AG04449 (cell line): ENCODE measurements at regions of chr3 and their contacts with region 1.

Region 1: DNA sequence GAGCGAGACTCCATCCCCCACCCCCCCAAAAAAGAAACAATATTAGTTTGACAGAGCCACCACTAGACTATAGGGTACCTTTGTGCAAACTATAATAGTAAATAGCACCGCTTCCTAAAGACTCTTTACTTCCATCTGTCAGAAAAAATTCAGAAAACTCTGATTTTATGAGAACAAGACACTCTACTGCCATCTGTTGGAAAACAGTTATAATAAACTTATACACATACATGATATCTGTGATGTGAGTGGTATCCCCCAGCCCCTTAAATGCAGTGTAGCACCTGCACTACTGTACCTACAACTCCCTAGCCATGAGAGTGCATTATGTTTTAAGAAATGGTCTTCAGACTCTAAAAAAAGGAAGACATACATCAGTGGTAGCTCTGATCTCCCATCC is 47.1 kb upstream of the CTDSPL start:
- DNase-seq: no peak
- H3K4me3 ChIP-seq: no peak overlapping the region
- CTCF ChIP-seq: no peak

Region 2: DNA sequence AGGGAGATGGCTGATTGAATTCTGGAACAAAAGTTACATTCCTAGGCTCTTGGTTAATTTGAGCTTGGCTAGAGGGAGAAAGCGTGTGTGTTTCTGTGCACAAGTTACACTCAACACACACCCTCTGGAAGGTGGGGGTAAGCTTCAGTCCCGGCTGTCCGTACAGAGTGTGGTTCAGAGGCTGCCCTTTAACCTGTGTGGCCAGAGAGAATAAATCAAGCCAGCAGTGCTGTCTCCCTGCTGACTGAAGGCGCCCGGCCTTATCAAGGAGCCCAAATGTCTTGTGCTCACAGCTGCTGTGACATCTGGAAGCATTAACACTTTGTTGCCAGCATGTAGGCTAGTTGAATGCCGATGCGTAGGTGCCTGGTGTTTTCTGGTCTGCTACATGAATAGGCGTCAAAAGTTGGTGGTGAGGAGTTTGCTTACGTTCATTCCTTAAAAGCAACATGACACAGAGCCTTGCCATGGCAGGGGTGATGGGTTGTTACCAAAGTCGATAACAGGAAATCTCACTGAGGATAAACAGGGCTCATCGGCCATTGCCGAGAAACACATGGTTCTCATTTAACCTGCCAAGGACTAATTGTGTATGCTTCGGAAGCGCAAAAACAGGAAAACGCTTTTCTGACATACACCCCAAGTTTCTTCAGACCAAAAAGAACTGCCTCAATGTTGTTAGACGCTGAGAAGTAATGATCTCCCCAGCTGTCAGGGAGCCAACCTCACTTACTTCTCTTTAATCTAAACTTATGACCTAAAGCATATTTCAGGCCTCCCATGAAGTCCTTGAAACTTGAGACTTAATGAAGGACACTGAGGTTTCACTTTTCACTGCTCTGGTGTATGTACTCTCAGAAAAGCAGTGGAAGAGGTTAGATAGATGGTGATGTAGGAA is 48.7 kb before region 1 on chr3:
- CTCF ChIA-PET with region 1: no interaction called
- POLR2A ChIA-PET with region 1: no interaction called
- DNase-seq: no peak
- H3K4me3 ChIP-seq: no peak overlapping the region
- CTCF ChIP-seq: no peak

Region 3: DNA sequence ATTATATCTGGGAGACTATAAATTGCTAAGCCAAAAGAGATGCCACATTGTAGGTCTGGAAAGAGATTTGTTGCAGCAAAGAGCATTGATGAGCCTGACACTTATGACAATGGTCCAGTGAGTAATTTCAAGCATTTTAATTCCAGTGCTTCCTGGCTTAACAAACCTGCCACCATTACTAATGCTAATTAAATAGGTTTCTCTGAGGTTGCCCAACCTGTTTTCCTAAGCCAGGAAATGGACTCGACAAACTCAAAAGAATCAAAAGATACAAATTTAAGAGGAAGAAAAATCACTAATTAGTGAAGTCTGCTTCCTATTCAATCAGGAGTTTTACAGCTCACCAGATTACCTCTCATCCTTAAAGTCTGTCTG is 10.4 kb after region 1 on chr3:
- CTCF ChIA-PET with region 1: interaction called, 15 read pairs
- POLR2A ChIA-PET with region 1: no interaction called
- DNase-seq: no peak
- H3K4me3 ChIP-seq: no peak overlapping the region
- CTCF ChIP-seq: no peak

Region 4: DNA sequence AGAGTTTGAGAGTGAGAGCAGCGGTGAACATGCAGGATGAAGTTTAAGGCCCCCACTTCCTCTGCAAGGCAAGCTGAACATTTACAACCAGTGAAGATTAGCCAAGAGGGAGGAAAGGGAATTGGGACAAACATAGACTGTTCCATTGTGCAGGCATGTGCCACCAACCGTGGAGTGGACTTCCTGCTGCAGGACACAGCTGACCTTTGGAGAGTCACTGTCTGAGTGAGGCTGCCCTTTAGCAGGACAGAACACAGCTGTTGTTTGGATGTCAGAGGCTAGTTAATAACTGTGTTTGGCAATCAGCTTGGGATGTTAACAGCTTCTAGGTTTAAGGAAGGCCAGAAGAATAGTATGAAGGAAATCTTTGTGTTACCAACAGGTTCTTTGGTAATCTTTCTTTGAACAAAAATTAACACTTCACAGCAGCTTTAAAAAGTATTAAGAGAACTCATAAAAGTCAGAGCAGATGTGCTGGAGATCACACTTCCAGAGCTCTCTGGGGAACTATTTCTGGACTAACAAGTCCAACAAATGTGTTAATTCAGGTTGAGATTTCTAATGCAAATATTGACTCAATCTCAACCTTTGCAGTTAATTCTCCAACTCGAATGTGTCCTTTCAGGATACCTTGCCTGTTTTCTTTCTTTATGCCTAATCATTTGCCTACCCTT is 78.5 kb after region 1 on chr3:
- CTCF ChIA-PET with region 1: no interaction called
- POLR2A ChIA-PET with region 1: no interaction called
- DNase-seq: no peak
- H3K4me3 ChIP-seq: no peak overlapping the region
- CTCF ChIP-seq: no peak